Head of caudate nucleus (tissue), 42 donors: ENCODE measurements at regions of chr1 and their contacts with region 1.

Region 1: DNA sequence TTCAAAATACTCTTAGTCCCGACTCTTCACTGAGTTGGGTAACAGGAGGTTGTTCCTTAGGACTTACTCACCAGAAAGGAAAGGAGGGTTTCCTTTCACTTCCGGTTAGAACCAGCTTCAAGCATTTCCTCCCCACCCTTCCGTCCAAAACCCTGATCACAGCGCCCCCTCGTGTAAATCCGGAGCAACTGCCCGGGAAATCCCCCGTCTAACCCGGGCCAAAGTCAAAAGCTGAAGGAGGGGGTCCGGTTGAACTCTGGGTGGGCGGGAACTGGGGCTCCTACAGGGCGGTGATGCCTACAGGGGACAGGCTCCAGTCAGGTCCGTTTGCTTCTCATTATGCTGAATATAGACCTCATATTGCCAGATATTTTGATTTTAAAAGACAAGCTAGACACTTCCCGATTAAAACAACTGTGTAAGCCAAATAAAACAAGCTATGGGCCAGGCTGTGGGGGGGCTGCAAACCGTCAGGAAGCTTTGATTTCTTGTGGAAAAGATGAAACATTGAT is 15.0 kb upstream of the MTARC2 start:
- DNase-seq: peak in 41 of 42 donors; percentile 9 to 87 (median 69)

Region 2: DNA sequence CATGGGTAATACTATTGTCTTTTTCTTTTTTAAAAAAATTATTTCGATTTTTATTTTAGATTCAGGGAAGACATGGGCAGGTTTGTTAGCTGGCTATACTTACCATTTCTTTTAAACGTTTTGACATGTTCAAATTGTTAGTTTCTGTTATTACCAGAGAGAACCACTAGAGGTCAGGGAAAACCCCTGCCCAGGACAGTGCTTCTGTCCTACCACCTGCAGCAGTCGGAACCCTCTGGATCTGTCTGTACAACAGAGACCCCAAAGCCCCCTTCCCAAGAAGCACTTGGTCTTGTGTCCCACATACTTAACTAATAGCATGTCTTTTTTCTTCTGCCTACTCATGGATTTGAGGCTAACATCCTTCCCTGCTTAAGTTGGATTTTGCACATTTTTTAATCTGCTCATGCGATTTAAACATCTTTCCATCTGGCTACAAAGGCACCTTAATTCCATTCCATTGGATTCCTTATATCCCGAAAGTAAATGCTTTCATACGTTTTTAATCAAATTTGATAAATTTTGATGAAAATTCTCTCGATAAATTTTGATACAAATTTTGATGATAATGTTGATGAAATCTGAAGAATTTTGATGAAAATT is 53.0 kb before region 1 on chr1:
- intact Hi-C with region 1: loop called (anchors 10 kb)
- DNase-seq: peak in 12 of 42 donors; percentile 15 to 63 (median 41)